ACHN (cell line): ENCODE measurements at regions of chr2 and their contacts with region 1.

Region 1: GRCh38 chr2:222318026-222318711 is 19.4 kb upstream of the PAX3 start:
- DNase-seq: peak; percentile 73

Region 2: GRCh38 chr2:222561817-222562645 is 243.9 kb after region 1 on chr2:
- in situ Hi-C with region 1: loop called (anchors 25 kb)
- DNase-seq: peak; percentile 74